ENCODE measurements at regions of chr17 and their contacts with region 1.

Region 1: GRCh38 chr17:80832888-80833583 is 158.6 kb upstream of the CHMP6 start:
- DNase-seq: peak; percentile 71
- ATAC-seq: peak; percentile 89
- H3K4me3 Mint-ChIP-seq: peak overlapping the region; percentile 94
- H3K27ac Mint-ChIP-seq: peak overlapping the region; percentile 98
- H3K4me1 Mint-ChIP-seq: peaks cover 23% of the 10 kb centered on the region
- H3K27me3 Mint-ChIP-seq: no peaks in the 10 kb centered on the region
- CTCF ChIP-seq: no peak

Region 2: GRCh38 chr17:80663781-80664206 is 169.2 kb before region 1 on chr17:
- CTCF ChIA-PET with region 1: no interaction called
- POLR2A ChIA-PET with region 1: no interaction called
- intact Hi-C with region 1: loop called (anchors 10 kb)
- DNase-seq: no peak
- ATAC-seq: no peak
- H3K4me3 Mint-ChIP-seq: no peak overlapping the region
- H3K27ac Mint-ChIP-seq: no peak overlapping the region
- H3K4me1 Mint-ChIP-seq: peaks cover 56% of the 10 kb centered on the region
- H3K27me3 Mint-ChIP-seq: no peaks in the 10 kb centered on the region
- CTCF ChIP-seq: no peak

Region 3: GRCh38 chr17:80791758-80792284 is 41.2 kb before region 1 on chr17:
- CTCF ChIA-PET with region 1: no interaction called
- POLR2A ChIA-PET with region 1: interaction called, 5 read pairs
- intact Hi-C with region 1: loop called (anchors 5 kb)
- DNase-seq: no peak
- ATAC-seq: no peak
- H3K4me3 Mint-ChIP-seq: no peak overlapping the region
- H3K27ac Mint-ChIP-seq: no peak overlapping the region
- H3K4me1 Mint-ChIP-seq: peaks cover 23% of the 10 kb centered on the region
- H3K27me3 Mint-ChIP-seq: no peaks in the 10 kb centered on the region
- CTCF ChIP-seq: no peak

Region 4: DNA sequence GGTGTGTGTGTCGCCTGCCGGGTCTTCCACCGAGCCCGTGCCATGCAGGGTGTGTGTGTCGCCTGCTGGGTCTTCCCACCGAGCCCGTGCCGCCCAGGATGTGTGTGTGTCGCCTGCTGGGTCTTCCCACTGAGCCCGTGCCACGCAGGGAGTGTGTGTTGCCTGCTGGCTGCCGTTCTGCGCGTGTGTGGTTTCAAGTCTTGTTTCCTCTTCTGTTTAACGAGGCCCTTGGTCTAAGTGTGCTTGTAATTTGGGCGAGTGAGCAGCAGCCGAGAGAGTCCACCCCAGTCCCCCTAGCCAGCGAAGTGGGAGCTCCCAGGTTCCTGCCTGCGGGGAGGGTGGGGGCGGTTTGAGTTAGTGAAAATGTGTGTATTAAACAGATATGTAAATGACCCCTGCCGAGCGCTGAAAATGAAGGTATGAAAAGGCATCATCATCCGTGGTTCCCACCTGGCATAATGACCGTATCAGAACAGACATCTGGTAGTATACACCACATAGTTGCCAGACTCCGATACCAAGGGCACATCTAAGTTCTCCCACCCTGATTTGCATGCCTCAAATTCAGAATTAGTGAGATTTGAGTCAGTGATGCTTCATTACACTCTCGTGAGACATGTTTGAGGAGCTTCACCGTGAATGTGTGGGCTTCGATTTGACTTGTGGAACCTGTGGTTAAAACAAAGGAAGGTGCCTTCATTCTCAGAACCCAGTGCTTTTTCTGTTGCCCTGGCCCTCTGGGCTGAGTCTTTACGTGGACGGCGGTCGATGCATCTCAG is 44.1 kb after region 1 on chr17:
- CTCF ChIA-PET with region 1: no interaction called
- POLR2A ChIA-PET with region 1: interaction called, 7 read pairs
- intact Hi-C with region 1: loop called (anchors 1 kb)
- DNase-seq: peak; percentile 54
- ATAC-seq: peak; percentile 91
- H3K4me3 Mint-ChIP-seq: peak overlapping the region; percentile 72
- H3K27ac Mint-ChIP-seq: peak overlapping the region; percentile 94
- H3K4me1 Mint-ChIP-seq: peaks cover 30% of the 10 kb centered on the region
- H3K27me3 Mint-ChIP-seq: no peaks in the 10 kb centered on the region
- CTCF ChIP-seq: no peak